ENCODE measurements at regions of chr12 and their contacts with region 1.

Region 1: DNA sequence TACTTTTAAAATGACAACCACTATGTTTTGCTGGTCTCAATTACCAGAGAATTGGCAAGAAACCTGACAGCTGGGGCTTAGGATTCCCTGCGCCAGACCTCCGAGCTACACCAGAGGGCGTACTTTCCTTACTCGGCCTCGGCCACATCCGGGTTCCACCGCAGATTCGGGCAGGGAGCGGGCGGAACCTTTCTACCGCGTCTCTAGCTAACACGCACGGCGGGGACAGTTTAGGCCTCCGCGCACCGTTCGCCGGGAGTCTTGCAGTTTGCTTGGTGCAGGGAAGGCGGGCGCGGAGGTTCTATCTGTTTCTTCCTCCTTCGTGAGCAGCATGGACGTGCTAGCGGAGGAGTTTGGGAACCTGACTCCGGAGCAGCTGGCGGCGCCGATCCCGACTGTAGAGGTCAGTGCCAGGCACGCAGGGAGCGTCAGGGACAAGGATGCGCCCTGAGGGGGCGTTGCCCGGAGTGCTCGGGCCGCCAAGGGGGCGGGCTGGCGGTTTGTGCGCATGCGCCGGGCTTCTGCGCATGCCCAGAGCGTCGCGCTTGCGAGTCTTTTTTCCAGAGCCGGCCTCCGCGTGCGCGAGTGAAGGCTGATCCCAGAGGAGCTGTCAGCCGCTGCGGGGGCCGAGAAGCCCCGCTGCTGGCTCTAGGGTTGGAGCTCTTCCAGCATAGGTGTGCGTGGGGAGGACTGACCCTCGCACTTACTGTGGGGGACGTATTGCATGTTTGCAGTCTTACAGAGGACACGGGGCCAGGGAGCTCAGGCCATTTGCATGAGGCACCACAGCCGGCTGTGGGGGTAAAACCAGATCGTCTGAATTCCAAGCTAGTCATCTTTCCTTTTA is at the start of gene POLR3B:
- DNase-seq: peak; percentile 92 to 98
- ATAC-seq: peak; percentile 95
- H3K4me3 ChIP-seq: peak within 1 kb of the TSS; percentile 66
- H3K27ac ChIP-seq: peak within 1 kb of the TSS; percentile 90 to 92
- H3K4me1 ChIP-seq: peaks cover 15% of the 10 kb centered on the region; the same call in 2 of the 3 replicates
- CTCF ChIP-seq: peak; percentile 89
- EP300 ChIP-seq: no peak
- POLR2A ChIP-seq: peak; percentile 92
- RAD21 ChIP-seq: peak; percentile 77 to 79
- polyA plus RNA-seq, gene POLR3B: 9.5 and 10.7 TPM in 2 replicates

Region 2: GRCh38 chr12:106296193-106296877 is 61.4 kb before region 1 on chr12:
- CTCF ChIA-PET with region 1: interaction called, 13 read pairs
- POLR2A ChIA-PET with region 1: interaction called, 9 read pairs
- DNase-seq: peak; percentile 39 to 69
- ATAC-seq: peak; percentile 90 to 94
- H3K4me3 ChIP-seq: no peak overlapping the region
- H3K27ac ChIP-seq: peak overlapping the region; percentile 22 to 57; a peak in 4 of 6 replicates
- H3K4me1 ChIP-seq: peaks cover 21% of the 10 kb centered on the region
- CTCF ChIP-seq: no peak
- EP300 ChIP-seq: no peak
- POLR2A ChIP-seq: no peak
- RAD21 ChIP-seq: no peak

Region 3: GRCh38 chr12:106369607-106370346 is 12.0 kb after region 1 on chr12:
- CTCF ChIA-PET with region 1: interaction called, 16 read pairs
- POLR2A ChIA-PET with region 1: interaction called, 6 read pairs
- DNase-seq: peak in 1 of 2 experiments; percentile 67
- ATAC-seq: peak; percentile 80 to 95; a peak in 5 of 6 replicates
- H3K4me3 ChIP-seq: no peak overlapping the region
- H3K27ac ChIP-seq: peak overlapping the region; percentile 52 to 67
- H3K4me1 ChIP-seq: peaks cover 17% of the 10 kb centered on the region
- CTCF ChIP-seq: no peak
- EP300 ChIP-seq: no peak
- POLR2A ChIP-seq: no peak
- RAD21 ChIP-seq: no peak

Region 4: DNA sequence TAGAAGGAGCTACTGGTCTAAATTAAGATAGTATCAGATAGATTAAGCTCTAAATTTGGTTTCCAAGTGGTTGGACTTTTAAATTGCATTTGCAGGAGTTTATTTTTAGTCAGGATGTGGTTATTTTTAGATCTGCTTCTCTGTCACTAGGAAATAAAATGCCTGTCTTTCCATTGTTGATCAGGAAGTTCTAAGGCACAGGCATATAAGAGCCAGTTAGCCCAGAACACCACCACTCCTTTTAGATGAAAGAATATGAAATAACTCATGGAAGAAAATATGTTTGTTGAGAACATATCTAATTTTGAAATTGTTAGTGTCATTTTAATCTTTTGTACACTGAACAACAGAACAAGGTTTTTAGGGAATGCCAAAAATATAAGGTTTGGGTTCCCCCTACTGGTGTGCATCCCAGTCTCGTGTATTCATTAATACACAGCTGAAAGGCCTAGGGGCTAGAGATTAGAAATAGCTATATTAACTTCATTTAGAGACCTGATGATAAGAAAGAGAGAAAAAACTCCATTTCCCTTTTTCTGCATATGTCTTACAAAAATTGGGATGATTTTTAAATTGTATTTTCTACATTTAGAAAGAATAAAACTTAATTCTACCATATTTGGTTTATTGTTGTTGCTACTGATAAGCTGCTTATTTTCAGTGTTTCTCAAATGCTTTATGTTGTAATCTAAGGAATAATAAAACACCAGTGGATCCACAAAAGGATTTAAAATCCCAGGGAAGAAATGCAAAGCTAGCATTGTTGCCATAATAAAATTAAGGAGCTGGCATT is 483.9 kb after region 1 on chr12:
- CTCF ChIA-PET with region 1: interaction called, 32 read pairs
- POLR2A ChIA-PET with region 1: interaction called, 6 read pairs
- DNase-seq: peak; percentile 50 to 59
- ATAC-seq: peak; percentile 81 to 89
- H3K4me3 ChIP-seq: no peak overlapping the region
- H3K27ac ChIP-seq: peak overlapping the region in 1 of 2 experiments; percentile 9; a peak in 3 of 6 replicates
- H3K4me1 ChIP-seq: peaks cover 28% of the 10 kb centered on the region
- CTCF ChIP-seq: peak; percentile 90
- EP300 ChIP-seq: no peak
- POLR2A ChIP-seq: no peak
- RAD21 ChIP-seq: peak; percentile 90 to 92